Left ventricle myocardium superior (tissue), 1 donor: ENCODE measurements at regions of chr13 and their contacts with region 1.

Region 1: DNA sequence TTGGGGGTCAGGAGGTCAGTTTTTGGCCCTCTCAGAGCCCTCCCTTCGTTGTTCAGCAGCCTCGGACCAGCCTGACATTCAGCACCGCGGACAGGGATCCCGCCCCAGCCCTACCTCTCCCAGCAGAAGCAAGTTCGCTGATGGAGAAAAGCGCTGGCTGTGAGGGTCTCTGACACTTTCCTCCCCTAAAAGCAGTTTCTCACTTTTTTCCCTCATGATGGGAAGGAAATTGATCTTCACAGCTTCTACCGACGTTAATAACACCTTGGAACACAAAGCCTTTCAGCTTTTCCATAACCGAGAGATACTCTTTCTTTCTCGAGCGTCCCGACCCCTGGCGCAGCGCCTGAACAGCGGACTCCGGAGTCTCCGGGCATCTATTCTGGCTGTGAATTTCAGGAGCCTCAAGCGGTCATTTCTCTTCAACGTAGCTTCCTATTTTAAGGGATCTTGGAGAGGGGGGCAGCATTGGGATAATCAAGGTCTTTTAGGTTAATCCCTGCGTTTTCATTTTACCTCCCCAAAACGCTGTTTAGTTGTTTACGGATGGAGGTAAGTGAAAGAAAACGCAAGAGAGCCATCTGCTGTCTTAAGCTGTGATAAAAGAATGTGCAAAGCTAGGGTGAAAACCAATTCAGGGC is 467.2 kb downstream of the ITGBL1 start:
- DNase-seq: peak; percentile 53
- ATAC-seq: peak; percentile 59

Region 2: DNA sequence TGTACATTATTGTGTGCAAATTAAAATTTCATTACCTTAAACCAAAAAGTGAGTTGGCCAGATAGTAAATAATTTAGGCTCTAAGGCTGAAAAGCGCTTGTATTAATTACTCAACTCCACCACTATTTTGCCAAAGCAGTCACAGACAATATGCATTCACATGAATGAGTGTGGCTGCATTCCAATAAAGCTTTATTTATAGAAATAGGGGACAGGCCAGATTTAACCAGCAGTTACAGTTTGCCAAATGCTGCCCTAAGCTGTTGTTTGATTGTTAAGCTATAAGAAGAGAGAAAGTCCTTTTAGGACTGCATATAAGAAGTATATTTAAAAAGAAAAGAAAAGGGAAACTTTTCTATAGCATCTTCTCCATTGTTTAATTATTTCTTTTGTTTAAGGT is 124.6 kb before region 1 on chr13:
- intact Hi-C with region 1: loop called (anchors 10 kb)
- DNase-seq: no peak
- ATAC-seq: peak; percentile 87